Adrenal gland (tissue), 19 donors: ENCODE measurements at regions of chr3 and their contacts with region 1.

Region 1: GRCh38 chr3:100665230-100665629 is 44.1 kb upstream of the TFG start:
- DNase-seq: no peak
- H3K4me3 ChIP-seq: no peak overlapping the region
- H3K27ac ChIP-seq: no peak overlapping the region
- H3K4me1 ChIP-seq: no peaks in the 10 kb centered on the region
- H3K27me3 ChIP-seq: no peaks in the 10 kb centered on the region
- CTCF ChIP-seq: no peak
- POLR2A ChIP-seq: no peak

Region 2: GRCh38 chr3:100682056-100682853 is 17.0 kb after region 1 on chr3:
- intact Hi-C with region 1: loop called in 1 of 2 experiments (anchors 2 kb)
- DNase-seq: peak in 2 of 7 donors; percentile 7 to 18
- H3K4me3 ChIP-seq: no peak overlapping the region
- H3K27ac ChIP-seq: no peak overlapping the region
- H3K4me1 ChIP-seq: no peaks in the 10 kb centered on the region
- H3K27me3 ChIP-seq: no peaks in the 10 kb centered on the region
- CTCF ChIP-seq: no peak
- POLR2A ChIP-seq: no peak